Gastrocnemius medialis (tissue), 4 donors: ENCODE measurements at regions of chr9 and their contacts with region 1.

Region 1: GRCh38 chr9:132507746-132508469 is 74.5 kb upstream of the BARHL1 start:
- DNase-seq: peak; percentile 14 to 25
- ATAC-seq: peak in 1 of 2 donors; percentile 60
- H3K4me3 ChIP-seq: no peak overlapping the region
- H3K27ac ChIP-seq: no peak overlapping the region
- H3K4me1 ChIP-seq: no peaks in the 10 kb centered on the region
- H3K27me3 ChIP-seq: peaks cover 17 to 33% (median 19%) of the 10 kb centered on the region in 3 donors
- CTCF ChIP-seq: peak; percentile 35 to 79 (median 70)
- POLR2A ChIP-seq: no peak

Region 2: DNA sequence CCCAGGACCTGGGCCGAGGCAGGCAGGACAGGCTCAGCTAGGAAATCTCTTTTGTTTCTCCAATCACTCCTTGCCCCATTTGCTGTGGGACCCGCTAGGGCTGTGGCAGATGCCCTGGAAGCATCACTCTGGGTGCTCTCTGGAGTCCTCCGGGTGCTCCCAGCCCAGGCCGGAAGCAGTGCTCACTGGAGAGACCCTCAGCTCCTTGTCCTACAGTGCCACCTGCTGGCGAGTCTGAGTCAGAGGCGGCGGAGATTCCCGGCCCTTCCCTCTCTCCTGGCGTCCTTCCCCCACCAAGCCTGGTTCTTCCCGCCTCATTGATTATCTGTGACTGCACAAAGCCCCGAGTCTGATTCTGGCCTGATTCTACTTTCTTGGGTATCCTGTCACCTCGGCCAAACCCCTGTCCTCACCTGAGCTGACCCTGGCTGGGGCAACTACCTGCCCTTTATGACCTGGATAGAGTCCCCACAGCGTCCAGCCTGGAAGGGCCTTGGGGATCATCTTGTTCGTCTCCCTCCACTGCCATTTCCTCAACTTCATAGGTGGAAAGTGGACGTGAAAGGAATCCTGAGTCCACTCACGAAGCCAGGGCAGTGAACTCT is 67.2 kb after region 1 on chr9:
- in situ Hi-C with region 1: no loop called
- intact Hi-C with region 1: loop called (anchors 1 kb)
- DNase-seq: peak; percentile 10 to 14
- ATAC-seq: no peak
- H3K4me3 ChIP-seq: no peak overlapping the region
- H3K27ac ChIP-seq: no peak overlapping the region
- H3K4me1 ChIP-seq: no peaks in the 10 kb centered on the region
- H3K27me3 ChIP-seq: peaks cover 49 to 67% (median 62%) of the 10 kb centered on the region in 3 donors
- CTCF ChIP-seq: peak; percentile 30 to 73 (median 67)
- POLR2A ChIP-seq: no peak

Region 3: GRCh38 chr9:132800038-132800648 is 292.2 kb after region 1 on chr9:
- in situ Hi-C with region 1: loop called (anchors 5 to 10 kb)
- intact Hi-C with region 1: loop called (anchors 2 kb)
- DNase-seq: peak; percentile 36 to 45
- ATAC-seq: peak; percentile 56 to 68
- H3K4me3 ChIP-seq: no peak overlapping the region
- H3K27ac ChIP-seq: no peak overlapping the region
- H3K4me1 ChIP-seq: peaks cover 3% of the 10 kb centered on the region in 2 donors
- H3K27me3 ChIP-seq: peaks cover 10 to 23% (median 16%) of the 10 kb centered on the region in 3 donors
- CTCF ChIP-seq: peak; percentile 42 to 84 (median 79)
- POLR2A ChIP-seq: no peak